B cell (primary cell): ENCODE measurements at regions of chr11 and their contacts with region 1.

Region 1: GRCh38 chr11:17384002-17384511 is 4.4 kb downstream of the KCNJ11 start:
- DNase-seq: peak; percentile 85
- ATAC-seq: peak; percentile 72
- H3K4me3 ChIP-seq: no peak overlapping the region
- H3K4me3 Mint-ChIP-seq: no peak overlapping the region
- H3K27ac ChIP-seq: no peak overlapping the region
- H3K27ac Mint-ChIP-seq: no peak overlapping the region
- H3K4me1 ChIP-seq: peaks cover 4 to 10% of the 10 kb centered on the region in 2 donors
- H3K4me1 Mint-ChIP-seq: peaks cover 2% of the 10 kb centered on the region
- H3K27me3 ChIP-seq: no peaks in the 10 kb centered on the region
- H3K27me3 Mint-ChIP-seq: peaks cover 5% of the 10 kb centered on the region
- CTCF ChIP-seq: peak; percentile 93

Region 2: GRCh38 chr11:17354601-17354991 is 29.5 kb before region 1 on chr11:
- CTCF ChIA-PET with region 1: interaction called, 12 read pairs
- POLR2A ChIA-PET with region 1: no interaction called
- intact Hi-C with region 1: loop called (anchors 1 kb)
- DNase-seq: peak; percentile 80
- ATAC-seq: no peak
- H3K4me3 ChIP-seq: no peak overlapping the region
- H3K4me3 Mint-ChIP-seq: peak overlapping the region; percentile 95
- H3K27ac ChIP-seq: no peak overlapping the region
- H3K27ac Mint-ChIP-seq: no peak overlapping the region
- H3K4me1 ChIP-seq: peaks cover 29 to 34% of the 10 kb centered on the region in 2 donors
- H3K4me1 Mint-ChIP-seq: peaks cover 32% of the 10 kb centered on the region
- H3K27me3 ChIP-seq: peaks cover 0 to 34% (median 21%) of the 10 kb centered on the region in 4 experiments
- H3K27me3 Mint-ChIP-seq: peaks cover 33% of the 10 kb centered on the region
- CTCF ChIP-seq: peak; percentile 82

Region 3: GRCh38 chr11:17396598-17397310 is 12.7 kb after region 1 on chr11:
- CTCF ChIA-PET with region 1: interaction called, 12 read pairs
- POLR2A ChIA-PET with region 1: no interaction called
- intact Hi-C with region 1: no loop called
- DNase-seq: no peak
- ATAC-seq: no peak
- H3K4me3 ChIP-seq: no peak overlapping the region
- H3K4me3 Mint-ChIP-seq: no peak overlapping the region
- H3K27ac ChIP-seq: no peak overlapping the region
- H3K27ac Mint-ChIP-seq: no peak overlapping the region
- H3K4me1 ChIP-seq: peaks cover 13 to 26% of the 10 kb centered on the region in 2 donors
- H3K4me1 Mint-ChIP-seq: peaks cover 15% of the 10 kb centered on the region
- H3K27me3 ChIP-seq: no peaks in the 10 kb centered on the region
- H3K27me3 Mint-ChIP-seq: no peaks in the 10 kb centered on the region
- CTCF ChIP-seq: no peak

Region 4: DNA sequence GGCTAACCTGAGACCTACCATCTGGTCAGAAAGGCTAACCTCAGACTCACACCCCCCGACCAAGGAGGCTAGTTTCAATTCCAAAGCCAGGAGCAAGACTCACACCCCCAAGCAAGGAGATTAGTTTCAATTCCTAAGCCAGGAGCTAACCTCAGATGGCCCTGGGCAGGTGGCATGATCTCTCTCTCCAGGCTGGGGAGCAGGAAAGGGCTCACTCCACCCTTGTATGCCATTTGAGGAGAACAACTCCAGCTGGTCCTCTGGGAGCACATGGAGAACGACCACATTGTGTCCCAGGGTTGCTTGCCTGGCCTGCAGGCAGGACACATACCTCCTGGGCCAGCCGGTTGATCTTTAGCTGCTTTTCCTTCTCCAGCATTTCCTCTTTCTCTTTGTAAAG is 127.5 kb after region 1 on chr11:
- CTCF ChIA-PET with region 1: interaction called, 116 read pairs
- POLR2A ChIA-PET with region 1: no interaction called
- intact Hi-C with region 1: no loop called
- DNase-seq: no peak
- ATAC-seq: no peak
- H3K4me3 ChIP-seq: no peak overlapping the region
- H3K4me3 Mint-ChIP-seq: no peak overlapping the region
- H3K27ac ChIP-seq: no peak overlapping the region
- H3K27ac Mint-ChIP-seq: no peak overlapping the region
- H3K4me1 ChIP-seq: no peaks in the 10 kb centered on the region
- H3K4me1 Mint-ChIP-seq: no peaks in the 10 kb centered on the region
- H3K27me3 ChIP-seq: no peaks in the 10 kb centered on the region
- H3K27me3 Mint-ChIP-seq: peaks cover 27% of the 10 kb centered on the region
- CTCF ChIP-seq: no peak

Region 5: DNA sequence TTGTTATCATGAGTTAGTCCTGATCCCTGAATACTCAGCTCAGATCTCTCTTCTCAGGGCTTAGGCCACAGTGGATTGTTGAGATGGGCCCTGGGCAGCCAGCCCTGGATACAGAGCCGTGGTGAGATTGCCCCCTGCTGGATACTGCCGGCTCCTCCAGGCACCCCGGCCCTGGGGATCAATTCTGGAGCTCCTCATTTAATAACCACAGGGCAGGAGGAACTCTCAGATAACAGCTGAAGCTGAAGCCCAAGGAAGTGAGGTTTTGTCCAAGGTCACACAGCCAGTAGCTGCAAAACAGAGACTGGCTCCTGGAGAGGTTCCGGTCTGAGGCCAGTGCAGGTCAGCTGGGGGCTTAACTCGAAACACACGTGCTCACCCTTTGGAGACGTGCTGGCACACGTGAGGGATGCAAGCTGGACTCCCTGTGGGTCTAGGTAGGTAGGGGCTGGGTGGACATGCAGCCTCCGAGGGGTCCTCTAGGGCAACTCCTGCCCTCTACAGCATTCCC is 144.2 kb after region 1 on chr11:
- CTCF ChIA-PET with region 1: interaction called, 28 read pairs
- POLR2A ChIA-PET with region 1: no interaction called
- intact Hi-C with region 1: loop called (anchors 1 kb)
- DNase-seq: peak; percentile 40
- ATAC-seq: no peak
- H3K4me3 ChIP-seq: no peak overlapping the region
- H3K4me3 Mint-ChIP-seq: no peak overlapping the region
- H3K27ac ChIP-seq: no peak overlapping the region
- H3K27ac Mint-ChIP-seq: no peak overlapping the region
- H3K4me1 ChIP-seq: no peaks in the 10 kb centered on the region
- H3K4me1 Mint-ChIP-seq: no peaks in the 10 kb centered on the region
- H3K27me3 ChIP-seq: no peaks in the 10 kb centered on the region
- H3K27me3 Mint-ChIP-seq: peaks cover 11% of the 10 kb centered on the region
- CTCF ChIP-seq: peak; percentile 56

Region 6: GRCh38 chr11:18012863-18013781 is 629.1 kb after region 1 on chr11 and contains the start of gene SERGEF:
- CTCF ChIA-PET with region 1: no interaction called
- POLR2A ChIA-PET with region 1: no interaction called
- intact Hi-C with region 1: loop called (anchors 10 kb)
- DNase-seq: peak; percentile 95
- ATAC-seq: peak; percentile 90
- H3K4me3 ChIP-seq: peak within 1 kb of the TSS; percentile 77 to 90 (median 83)
- H3K4me3 Mint-ChIP-seq: peak within 1 kb of the TSS; percentile 100
- H3K27ac ChIP-seq: peak within 1 kb of the TSS; percentile 61 to 65
- H3K27ac Mint-ChIP-seq: peak within 1 kb of the TSS; percentile 99
- H3K4me1 ChIP-seq: peaks cover 9 to 21% of the 10 kb centered on the region in 2 donors
- H3K4me1 Mint-ChIP-seq: peaks cover 27% of the 10 kb centered on the region
- H3K27me3 ChIP-seq: no peaks in the 10 kb centered on the region
- H3K27me3 Mint-ChIP-seq: no peaks in the 10 kb centered on the region
- CTCF ChIP-seq: no peak
- total RNA-seq, gene SERGEF: 52.5 and 54.3 TPM in 2 replicates